WTC11 (cell line): ENCODE measurements at regions of chr18 and their contacts with region 1.

Region 1: DNA sequence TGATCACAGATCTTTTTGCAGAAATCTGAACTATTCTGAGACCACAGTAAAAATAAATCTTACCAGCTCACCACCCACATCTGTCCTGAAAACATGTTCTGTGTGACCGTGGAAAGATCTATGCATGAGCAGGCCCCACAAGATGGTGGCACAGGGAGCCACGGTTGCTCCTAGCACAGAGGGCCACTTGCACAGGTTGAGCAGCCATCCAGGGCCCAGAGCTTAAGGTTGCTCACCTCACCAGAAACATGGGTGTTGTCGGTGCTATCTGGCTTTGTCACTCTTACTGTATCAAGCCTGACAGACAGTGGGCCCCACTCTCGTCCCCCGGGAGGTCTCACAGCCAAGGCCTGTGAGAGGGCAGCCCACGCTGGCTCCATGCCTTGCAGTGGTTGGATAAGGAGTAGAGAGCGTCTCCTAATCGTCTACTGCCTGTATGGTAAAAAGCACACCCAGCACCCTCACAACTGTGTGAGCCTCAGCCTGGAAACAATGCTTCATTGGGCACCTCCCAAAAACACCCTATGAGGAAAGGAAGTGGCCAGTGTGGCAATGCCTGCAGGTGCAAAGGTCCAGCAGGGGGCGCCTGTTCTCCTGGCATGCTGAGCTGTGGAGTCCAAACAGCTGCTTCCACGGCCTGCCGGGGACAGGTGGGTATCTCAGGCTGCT is 19.6 kb downstream of the TUBB6 start:
- DNase-seq: peak; percentile 94
- ATAC-seq: peak; percentile 93
- H3K4me3 Mint-ChIP-seq: no peak overlapping the region
- H3K27ac Mint-ChIP-seq: peak overlapping the region; percentile 80
- H3K4me1 Mint-ChIP-seq: peaks cover 15% of the 10 kb centered on the region
- H3K27me3 Mint-ChIP-seq: no peaks in the 10 kb centered on the region
- CTCF ChIP-seq: peak; percentile 86

Region 2: DNA sequence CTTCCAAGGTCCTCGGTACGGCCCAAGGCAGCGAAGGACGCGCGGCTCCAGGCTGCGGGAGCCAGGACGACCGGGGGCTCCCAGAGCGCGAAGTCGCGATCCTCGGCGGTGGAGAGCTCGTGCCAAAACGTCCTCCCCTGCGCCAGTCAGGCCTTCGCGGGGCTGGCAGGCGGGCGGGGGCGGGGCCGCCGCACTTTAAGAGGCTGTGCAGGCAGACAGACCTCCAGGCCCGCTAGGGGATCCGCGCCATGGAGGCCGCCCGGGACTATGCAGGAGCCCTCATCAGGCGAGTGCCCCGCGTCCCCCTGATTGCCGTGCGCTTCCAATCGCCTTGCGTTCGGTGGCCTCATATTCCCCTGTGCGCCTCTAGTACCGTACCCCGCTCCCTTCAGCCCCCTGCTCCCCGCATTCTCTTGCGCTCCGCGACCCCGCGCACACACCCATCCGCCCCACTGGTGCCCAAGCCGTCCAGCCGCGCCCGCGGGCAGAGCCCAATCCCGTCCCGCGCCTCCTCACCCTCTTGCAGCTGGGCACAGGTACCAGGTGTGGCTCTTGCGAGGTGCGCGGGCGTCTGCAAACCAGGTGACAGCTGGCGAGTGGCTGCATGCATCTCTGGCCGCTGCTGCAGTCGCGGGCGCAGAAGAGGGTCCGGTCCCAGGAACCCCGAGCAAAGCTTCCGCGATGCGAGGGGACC is 73.4 kb before region 1 on chr18 and contains the start of gene CIDEA:
- CTCF ChIA-PET with region 1: interaction called, 10 read pairs
- POLR2A ChIA-PET with region 1: no interaction called
- DNase-seq: peak; percentile 66
- ATAC-seq: peak; percentile 75
- H3K4me3 Mint-ChIP-seq: peak within 1 kb of the TSS; percentile 73
- H3K27ac Mint-ChIP-seq: no peak within 1 kb of the TSS
- H3K4me1 Mint-ChIP-seq: peaks cover 24% of the 10 kb centered on the region
- H3K27me3 Mint-ChIP-seq: peaks cover 70% of the 10 kb centered on the region
- CTCF ChIP-seq: no peak
- total RNA-seq, gene CIDEA: 0.23 to 0.50 TPM (median 0.23 TPM) in 3 replicates

Region 3: GRCh38 chr18:12278741-12279682 is 48.6 kb before region 1 on chr18:
- CTCF ChIA-PET with region 1: interaction called, 20 read pairs
- POLR2A ChIA-PET with region 1: no interaction called
- DNase-seq: peak; percentile 71
- ATAC-seq: peak; percentile 93
- H3K4me3 Mint-ChIP-seq: no peak overlapping the region
- H3K27ac Mint-ChIP-seq: peak overlapping the region; percentile 36
- H3K4me1 Mint-ChIP-seq: peaks cover 25% of the 10 kb centered on the region
- H3K27me3 Mint-ChIP-seq: no peaks in the 10 kb centered on the region; the same call in 1 of the 2 replicates
- CTCF ChIP-seq: no peak

Region 4: DNA sequence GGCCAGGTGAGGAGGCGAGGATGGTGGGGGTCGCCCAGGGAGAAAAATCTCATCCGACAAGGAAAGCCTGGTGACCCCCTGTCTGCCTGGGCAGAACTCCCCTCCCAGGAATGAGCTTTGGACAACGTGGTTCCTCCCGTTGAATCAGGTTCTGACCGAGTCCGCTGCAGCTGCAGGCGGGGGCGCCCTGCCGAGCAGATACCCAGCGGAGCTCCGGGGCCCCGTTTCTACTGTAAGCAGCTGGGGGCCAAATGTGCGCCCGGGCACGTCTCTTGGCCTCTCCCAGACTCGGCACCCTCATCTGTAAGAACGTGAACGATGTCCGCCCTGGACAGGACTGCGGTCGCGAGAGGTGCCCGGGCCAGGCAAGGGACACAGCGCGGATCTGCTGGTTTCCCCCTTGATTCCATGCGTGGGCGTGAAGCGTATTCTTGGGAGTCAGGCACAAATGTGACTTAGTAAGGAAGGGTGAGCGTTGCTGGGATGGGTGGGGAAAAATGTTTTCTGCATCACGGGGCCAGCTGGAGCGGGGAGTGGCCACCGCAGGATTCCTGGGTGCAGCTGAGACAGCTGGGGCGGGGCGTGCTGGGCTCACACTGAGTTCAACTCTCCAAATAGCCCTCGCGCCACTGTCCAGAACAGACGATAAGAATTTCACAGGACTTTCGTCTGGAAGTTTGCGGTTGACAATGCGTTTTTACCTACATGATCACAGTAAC is 39.8 kb before region 1 on chr18:
- CTCF ChIA-PET with region 1: interaction called, 23 read pairs
- POLR2A ChIA-PET with region 1: no interaction called
- DNase-seq: peak; percentile 57
- ATAC-seq: peak; percentile 9
- H3K4me3 Mint-ChIP-seq: peak overlapping the region; percentile 82
- H3K27ac Mint-ChIP-seq: peak overlapping the region; percentile 55
- H3K4me1 Mint-ChIP-seq: peaks cover 36% of the 10 kb centered on the region
- H3K27me3 Mint-ChIP-seq: peaks cover 33% of the 10 kb centered on the region
- CTCF ChIP-seq: no peak

Region 5: GRCh38 chr18:12308386-12309100 is 19.1 kb before region 1 on chr18:
- CTCF ChIA-PET with region 1: interaction called, 32 read pairs
- POLR2A ChIA-PET with region 1: no interaction called
- DNase-seq: peak; percentile 67
- ATAC-seq: peak; percentile 33
- H3K4me3 Mint-ChIP-seq: peak overlapping the region; percentile 79
- H3K27ac Mint-ChIP-seq: no peak overlapping the region
- H3K4me1 Mint-ChIP-seq: peaks cover 49% of the 10 kb centered on the region
- H3K27me3 Mint-ChIP-seq: peaks cover 20% of the 10 kb centered on the region
- CTCF ChIP-seq: no peak

Region 6: DNA sequence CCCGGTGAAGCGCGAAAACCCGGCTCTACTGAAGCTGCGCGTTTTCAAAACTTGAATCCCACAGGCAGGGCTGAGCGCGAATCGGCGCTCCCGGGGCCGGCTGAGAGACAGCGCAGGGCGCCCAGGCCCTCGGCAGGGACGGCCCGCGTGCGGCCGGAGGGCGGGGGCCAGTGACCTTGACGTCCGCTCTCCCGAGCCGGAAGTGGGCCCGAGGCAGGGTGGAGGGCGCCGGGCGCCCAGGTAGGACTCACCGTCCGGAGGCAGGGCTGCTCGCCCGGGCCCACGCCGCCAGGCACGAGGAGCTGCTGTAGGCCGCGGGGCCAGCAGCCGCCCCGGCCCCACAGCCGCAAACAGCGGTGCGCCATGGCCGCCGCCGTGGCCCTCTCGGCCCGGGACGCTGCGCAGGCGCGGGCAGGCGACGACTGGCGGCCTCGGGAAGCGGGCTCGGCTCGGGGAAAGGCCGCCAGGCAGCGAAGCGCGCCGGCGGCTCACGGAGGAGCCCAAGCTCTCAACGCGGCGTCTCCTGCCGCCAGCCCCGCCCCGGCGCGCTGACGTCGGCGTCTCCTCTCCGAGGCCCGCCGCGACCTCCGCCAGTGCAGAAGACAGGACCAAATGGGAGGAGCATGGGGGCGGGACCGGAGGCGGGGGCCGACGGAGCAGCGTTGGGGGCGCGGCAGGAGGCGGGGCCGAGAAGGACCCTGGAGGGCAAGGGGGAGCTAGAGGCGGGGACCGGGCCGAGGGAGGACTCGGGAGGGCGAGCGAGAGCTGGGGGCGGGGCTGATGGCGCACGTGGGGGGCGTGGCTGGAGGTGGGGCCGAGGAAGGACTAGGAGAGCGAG is 49.3 kb after region 1 on chr18 and contains the start of gene AFG3L2:
- CTCF ChIA-PET with region 1: interaction called, 27 read pairs
- POLR2A ChIA-PET with region 1: interaction called, 4 read pairs
- DNase-seq: peak; percentile 100
- ATAC-seq: peak; percentile 83
- H3K4me3 Mint-ChIP-seq: peak within 1 kb of the TSS; percentile 91
- H3K27ac Mint-ChIP-seq: peak within 1 kb of the TSS; percentile 100
- H3K4me1 Mint-ChIP-seq: peaks cover 41% of the 10 kb centered on the region
- H3K27me3 Mint-ChIP-seq: no peaks in the 10 kb centered on the region
- CTCF ChIP-seq: no peak
- total RNA-seq, gene AFG3L2: 73.9 to 109 TPM (median 76.0 TPM) in 3 replicates